ENCODE measurements at regions of chr2 and their contacts with region 1.

Region 1: DNA sequence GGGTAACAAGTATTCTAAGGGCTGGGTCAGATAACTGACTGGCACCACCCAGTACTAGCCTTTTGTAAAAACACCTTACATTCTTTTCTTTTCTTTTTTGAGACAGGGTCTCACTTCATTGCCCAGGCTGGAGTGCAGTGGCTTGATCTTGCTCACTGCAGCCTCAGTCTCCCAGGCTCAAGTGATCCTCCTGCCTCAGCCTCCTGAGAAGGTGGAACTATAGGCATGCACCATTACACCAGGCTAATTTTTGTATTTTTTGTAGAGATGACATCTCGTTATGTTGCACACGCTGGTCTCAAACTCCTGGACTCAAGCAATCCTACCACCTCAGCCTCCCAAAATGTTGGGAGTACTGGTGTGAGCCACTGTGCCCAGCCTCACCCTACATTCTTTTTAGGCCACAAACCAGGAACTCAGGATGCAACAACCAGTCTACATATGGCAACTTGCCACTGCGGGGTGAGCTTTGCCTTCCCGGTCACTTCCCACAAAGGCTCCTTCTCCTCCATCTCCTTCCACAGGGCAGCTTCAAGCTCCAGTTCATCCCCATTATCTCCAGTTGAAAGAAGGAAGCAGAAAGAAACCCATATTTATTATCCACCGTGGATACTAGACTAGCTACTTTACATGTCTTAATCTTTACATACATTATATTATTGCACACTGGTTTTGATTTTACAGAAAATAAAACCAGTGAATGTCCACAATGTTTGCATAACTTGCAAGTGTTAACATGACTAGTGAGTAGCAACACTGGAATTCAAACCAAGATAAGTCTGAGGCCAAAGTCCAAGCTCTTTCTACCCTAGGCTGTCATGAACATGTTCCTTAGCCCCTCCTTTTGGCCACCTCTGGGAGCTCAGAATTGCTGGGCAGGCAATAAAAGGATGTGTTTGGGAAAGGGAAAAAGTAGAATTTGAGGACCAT is 23.7 kb upstream of the AP1S3 start:
- DNase-seq: peak; percentile 92 to 98
- H3K4me3 ChIP-seq: no peak overlapping the region; the same call in 1 of the 2 replicates
- H3K27ac ChIP-seq: peak overlapping the region; percentile 85
- H3K4me1 ChIP-seq: peaks cover 51% of the 10 kb centered on the region
- H3K27me3 ChIP-seq: no peaks in the 10 kb centered on the region
- CTCF ChIP-seq: peak; percentile 67

Region 2: DNA sequence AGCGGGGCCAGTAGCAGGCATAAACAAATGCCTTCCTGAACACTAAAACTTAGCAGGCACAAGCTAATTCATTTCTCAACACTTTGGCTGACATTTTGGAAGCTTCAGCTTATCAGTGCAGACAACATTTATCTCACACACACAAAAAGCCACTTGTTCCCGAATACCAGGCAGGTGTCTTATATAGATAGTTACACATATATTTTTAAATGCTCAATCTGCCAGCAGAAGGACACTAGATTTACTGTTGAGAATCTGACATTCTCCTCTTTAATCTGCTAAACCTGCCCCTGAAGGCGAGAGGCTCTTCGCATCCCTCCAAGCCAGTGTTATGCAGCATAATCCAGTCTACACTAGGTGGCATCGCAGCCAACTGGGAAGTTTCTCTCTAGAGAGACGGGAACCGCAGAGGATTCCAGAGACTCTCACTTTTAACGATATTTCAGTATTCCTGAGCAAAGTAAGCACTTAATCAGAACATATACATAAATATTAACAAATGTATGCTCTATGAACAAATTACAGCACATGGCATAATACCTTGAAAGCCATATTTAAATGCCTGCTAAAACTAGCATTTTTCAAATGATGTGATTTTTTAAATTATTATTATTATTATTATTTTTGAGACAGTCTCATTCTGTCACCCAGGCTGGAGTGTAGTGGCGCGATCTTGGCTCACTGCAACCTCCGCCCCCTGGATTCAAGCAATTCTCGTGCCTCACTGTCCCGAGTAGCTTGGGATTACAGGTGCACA is 168.7 kb before region 1 on chr2:
- CTCF ChIA-PET with region 1: no interaction called
- POLR2A ChIA-PET with region 1: no interaction called
- intact Hi-C with region 1: loop called (anchors 1 kb)
- DNase-seq: peak in 1 of 2 experiments; percentile 60
- H3K4me3 ChIP-seq: no peak overlapping the region
- H3K27ac ChIP-seq: no peak overlapping the region
- H3K4me1 ChIP-seq: peaks cover 15% of the 10 kb centered on the region
- H3K27me3 ChIP-seq: no peaks in the 10 kb centered on the region
- CTCF ChIP-seq: peak; percentile 79

Region 3: DNA sequence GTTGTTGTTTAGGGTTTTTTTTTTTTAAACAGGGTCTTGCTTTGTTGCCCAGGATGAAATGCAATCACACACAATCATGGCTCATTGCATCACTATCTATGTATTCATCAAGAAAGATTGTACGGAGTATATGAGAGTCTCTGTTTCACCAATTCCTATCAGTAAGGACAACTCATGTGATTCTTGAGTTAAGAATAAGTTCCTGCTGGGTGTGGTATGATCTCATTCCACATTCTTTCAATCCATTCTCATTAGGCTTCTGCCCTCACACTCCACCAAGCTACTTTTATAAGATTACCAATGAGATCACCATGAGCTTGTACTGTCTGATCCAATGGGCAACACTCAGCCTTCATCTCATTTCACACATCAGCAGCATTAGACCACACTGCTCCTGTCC is 14.5 kb before region 1 on chr2:
- CTCF ChIA-PET with region 1: interaction called, 3 read pairs
- POLR2A ChIA-PET with region 1: interaction called, 4 read pairs
- intact Hi-C with region 1: loop called (anchors 1 kb)
- DNase-seq: peak; percentile 33 to 93
- H3K4me3 ChIP-seq: no peak overlapping the region
- H3K27ac ChIP-seq: peak overlapping the region; percentile 84
- H3K4me1 ChIP-seq: peaks cover 14% of the 10 kb centered on the region
- H3K27me3 ChIP-seq: no peaks in the 10 kb centered on the region
- CTCF ChIP-seq: no peak

Region 4: DNA sequence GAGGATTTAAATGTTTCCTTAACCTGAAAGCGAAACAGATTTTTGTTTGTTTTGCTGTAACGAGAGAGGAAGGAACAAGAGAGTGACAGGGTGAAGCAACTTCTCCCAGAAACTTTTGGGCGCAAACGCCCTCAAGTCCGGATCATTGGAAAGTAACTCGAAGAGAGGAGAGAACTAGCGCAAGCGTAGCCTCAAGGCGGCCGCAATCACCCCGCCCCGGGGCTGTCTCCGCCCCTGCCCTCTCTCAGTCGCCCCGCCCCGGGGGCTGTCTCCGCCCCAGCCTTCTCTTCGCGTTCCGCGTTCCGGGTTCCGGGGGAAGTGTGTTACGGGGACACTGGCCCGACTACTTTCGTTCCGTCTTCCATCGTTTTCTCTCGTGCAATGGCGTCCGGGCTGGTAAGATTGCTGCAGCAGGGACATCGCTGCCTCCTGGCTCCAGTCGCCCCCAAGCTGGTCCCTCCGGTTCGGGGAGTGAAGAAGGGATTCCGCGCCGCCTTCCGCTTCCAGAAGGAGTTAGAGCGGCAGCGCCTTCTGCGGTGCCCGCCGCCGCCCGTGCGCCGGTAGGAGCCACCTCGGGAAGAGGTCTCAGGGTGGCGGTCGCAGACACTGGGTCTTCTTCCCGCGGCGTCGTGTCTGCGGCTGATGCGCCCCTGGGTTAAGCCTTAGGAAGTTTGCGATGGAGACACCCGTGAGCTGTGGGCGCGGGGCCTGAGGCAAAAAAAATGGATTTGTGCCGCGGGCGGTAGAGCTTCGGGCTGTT is 96.2 kb after region 1 on chr2 and contains the start of gene MRPL44:
- CTCF ChIA-PET with region 1: no interaction called
- POLR2A ChIA-PET with region 1: interaction called, 9 read pairs
- intact Hi-C with region 1: loop called (anchors 1 kb)
- DNase-seq: peak; percentile 92 to 100
- H3K4me3 ChIP-seq: peak within 1 kb of the TSS; percentile 81
- H3K27ac ChIP-seq: peak within 1 kb of the TSS; percentile 73
- H3K4me1 ChIP-seq: peaks cover 37% of the 10 kb centered on the region
- H3K27me3 ChIP-seq: no peaks in the 10 kb centered on the region
- CTCF ChIP-seq: 0 out of 2 replicates have a peak, but pooled peaks have one; percentile 7
- total RNA-seq, gene MRPL44: 66.4 and 76.6 TPM in 2 replicates